H1 (cell line): ENCODE measurements at regions of chrX and their contacts with region 1.

Region 1: DNA sequence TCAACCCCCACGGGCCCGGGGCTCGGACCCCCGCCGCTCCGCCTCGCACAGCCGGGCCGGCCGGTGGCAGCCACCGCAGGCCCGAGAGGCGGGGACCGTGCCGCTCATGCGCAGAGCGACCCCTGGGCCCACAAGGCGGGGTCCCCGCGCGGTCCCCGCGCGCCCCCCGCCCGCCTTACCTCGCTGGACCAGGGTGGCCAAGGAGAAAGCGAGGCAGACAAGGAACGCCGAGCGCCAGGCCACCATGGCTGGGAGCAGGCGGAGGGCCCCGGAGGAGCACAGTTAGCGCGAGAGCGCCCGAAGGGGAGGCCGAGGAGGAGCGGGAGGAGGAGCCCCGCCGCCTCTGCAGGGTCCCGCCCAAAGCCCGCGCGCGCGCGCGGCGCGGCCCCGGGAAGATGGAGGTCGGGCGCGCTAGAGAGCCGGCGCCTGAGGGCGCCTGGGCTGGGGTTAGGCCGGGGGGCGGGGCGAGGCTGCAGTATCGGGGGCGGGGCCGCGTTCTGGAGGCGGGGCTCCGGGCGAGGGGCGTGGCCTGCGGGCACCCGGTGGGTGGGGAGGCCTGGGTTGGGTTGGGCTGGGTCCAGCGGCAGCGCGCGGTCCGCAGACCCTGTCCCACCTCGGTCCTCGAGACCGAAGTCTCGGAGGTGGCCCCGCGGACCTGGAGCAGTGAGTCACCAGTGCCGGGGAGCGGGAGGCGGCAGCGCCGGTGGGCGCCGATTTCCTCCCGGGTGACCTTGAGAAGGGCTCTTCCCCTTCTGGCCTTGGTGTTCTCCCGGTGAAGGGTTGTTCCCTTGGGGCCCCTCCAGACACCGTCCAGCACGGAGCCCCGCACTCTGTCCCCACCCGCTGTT is at the start of gene CD99L2:
- DNase-seq: peak; percentile 53 to 93
- H3K4me3 ChIP-seq: peak within 1 kb of the TSS; percentile 51 to 93 (median 64)
- H3K27ac ChIP-seq: peak within 1 kb of the TSS; percentile 86; the same call in 1 of the 2 replicates
- H3K4me1 ChIP-seq: peaks cover 7 to 24% (median 13%) of the 10 kb centered on the region in 4 experiments; a peak in 6 of 7 replicates
- H3K27me3 ChIP-seq: no peaks in the 10 kb centered on the region; a peak in 1 of 7 replicates
- CTCF ChIP-seq: no peak
- EP300 ChIP-seq: no peak
- POLR2A ChIP-seq: peak in 1 of 2 experiments; percentile 75; a peak in 2 of 3 replicates
- RAD21 ChIP-seq: 0 out of 4 replicates have a peak, but pooled peaks of 1 of the 2 experiments have one; percentile 0
- total RNA-seq, gene CD99L2: 6.6 and 8.5 TPM in 2 replicates

Region 2: GRCh38 chrX:150919401-150919800 is 20.8 kb after region 1 on chrX:
- CTCF ChIA-PET with region 1: no interaction called
- POLR2A ChIA-PET with region 1: interaction called, 13 read pairs
- DNase-seq: no peak
- H3K4me3 ChIP-seq: no peak overlapping the region
- H3K27ac ChIP-seq: no peak overlapping the region
- H3K4me1 ChIP-seq: peaks cover 0 to 3% (median 1%) of the 10 kb centered on the region in 4 experiments; a peak in 2 of 7 replicates
- H3K27me3 ChIP-seq: no peaks in the 10 kb centered on the region
- CTCF ChIP-seq: no peak
- EP300 ChIP-seq: no peak
- POLR2A ChIP-seq: no peak
- RAD21 ChIP-seq: no peak

Region 3: GRCh38 chrX:150934453-150934852 is 35.9 kb after region 1 on chrX:
- CTCF ChIA-PET with region 1: interaction called, 3 read pairs
- POLR2A ChIA-PET with region 1: interaction called, 15 read pairs
- DNase-seq: no peak
- H3K4me3 ChIP-seq: no peak overlapping the region
- H3K27ac ChIP-seq: no peak overlapping the region
- H3K4me1 ChIP-seq: peaks cover 0 to 6% (median 2%) of the 10 kb centered on the region in 4 experiments; a peak in 4 of 7 replicates
- H3K27me3 ChIP-seq: no peaks in the 10 kb centered on the region
- CTCF ChIP-seq: no peak
- EP300 ChIP-seq: no peak
- POLR2A ChIP-seq: no peak
- RAD21 ChIP-seq: no peak

Region 4: DNA sequence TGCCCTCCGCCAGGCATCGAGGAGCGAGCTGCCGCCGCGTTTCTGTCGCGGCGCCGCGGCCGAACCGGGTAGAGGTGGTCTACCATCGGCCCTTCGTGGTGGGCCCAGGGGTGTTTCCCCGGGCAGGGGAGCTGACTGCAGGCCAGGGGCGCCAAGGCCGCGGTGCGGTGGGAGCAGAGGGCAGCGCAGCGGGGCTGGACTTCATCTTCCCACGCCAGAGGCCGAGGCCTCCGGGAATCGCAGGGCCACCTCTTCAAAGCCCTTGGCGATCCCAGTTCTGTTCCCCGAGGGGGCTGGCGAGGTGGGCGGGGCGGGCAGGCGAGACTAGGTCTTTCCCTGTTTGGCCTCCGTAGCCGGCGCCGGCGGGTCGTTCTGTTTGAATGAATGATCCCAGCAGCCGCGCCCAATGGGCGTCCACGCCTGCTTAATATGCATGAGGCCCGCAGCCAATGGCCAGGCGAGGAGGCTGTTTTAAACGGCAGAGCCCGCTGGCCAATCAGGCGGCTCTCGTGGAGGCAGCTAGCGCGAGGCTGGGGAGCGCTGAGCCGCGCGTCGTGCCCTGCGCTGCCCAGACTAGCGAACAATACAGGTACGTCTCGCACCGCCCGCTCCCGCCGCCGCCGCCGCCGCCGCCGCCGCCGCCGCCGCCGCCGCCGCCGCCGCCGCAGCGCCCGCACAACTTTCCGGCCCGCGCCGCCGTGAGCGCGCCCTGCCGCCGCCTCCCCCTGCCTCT is 84.4 kb after region 1 on chrX and contains the start of gene HMGB3:
- CTCF ChIA-PET with region 1: no interaction called
- POLR2A ChIA-PET with region 1: interaction called, 51 read pairs
- DNase-seq: peak; percentile 85
- H3K4me3 ChIP-seq: peak within 1 kb of the TSS; percentile 52 to 87 (median 63)
- H3K27ac ChIP-seq: peak within 1 kb of the TSS; percentile 77; the same call in 1 of the 2 replicates
- H3K4me1 ChIP-seq: peaks cover 0 to 6% (median 0%) of the 10 kb centered on the region in 4 experiments; a peak in 2 of 7 replicates
- H3K27me3 ChIP-seq: peaks cover 0 to 2% (median 0%) of the 10 kb centered on the region in 4 experiments; a peak in 1 of 7 replicates
- CTCF ChIP-seq: no peak
- EP300 ChIP-seq: no peak
- POLR2A ChIP-seq: peak; percentile 55 to 75
- RAD21 ChIP-seq: no peak; a peak in 2 of 4 replicates
- total RNA-seq, gene HMGB3: 340 and 346 TPM in 2 replicates